Activated naive CD8-positive, alpha-beta T cell treated with anti-CD3 and anti-CD28 coated beads, Interleukin-2, amount 10 ng/mL, durations not matched to agents 7 days and 5 days (primary cell): ENCODE measurements at regions of chr1 and their contacts with region 1.

Region 1: DNA sequence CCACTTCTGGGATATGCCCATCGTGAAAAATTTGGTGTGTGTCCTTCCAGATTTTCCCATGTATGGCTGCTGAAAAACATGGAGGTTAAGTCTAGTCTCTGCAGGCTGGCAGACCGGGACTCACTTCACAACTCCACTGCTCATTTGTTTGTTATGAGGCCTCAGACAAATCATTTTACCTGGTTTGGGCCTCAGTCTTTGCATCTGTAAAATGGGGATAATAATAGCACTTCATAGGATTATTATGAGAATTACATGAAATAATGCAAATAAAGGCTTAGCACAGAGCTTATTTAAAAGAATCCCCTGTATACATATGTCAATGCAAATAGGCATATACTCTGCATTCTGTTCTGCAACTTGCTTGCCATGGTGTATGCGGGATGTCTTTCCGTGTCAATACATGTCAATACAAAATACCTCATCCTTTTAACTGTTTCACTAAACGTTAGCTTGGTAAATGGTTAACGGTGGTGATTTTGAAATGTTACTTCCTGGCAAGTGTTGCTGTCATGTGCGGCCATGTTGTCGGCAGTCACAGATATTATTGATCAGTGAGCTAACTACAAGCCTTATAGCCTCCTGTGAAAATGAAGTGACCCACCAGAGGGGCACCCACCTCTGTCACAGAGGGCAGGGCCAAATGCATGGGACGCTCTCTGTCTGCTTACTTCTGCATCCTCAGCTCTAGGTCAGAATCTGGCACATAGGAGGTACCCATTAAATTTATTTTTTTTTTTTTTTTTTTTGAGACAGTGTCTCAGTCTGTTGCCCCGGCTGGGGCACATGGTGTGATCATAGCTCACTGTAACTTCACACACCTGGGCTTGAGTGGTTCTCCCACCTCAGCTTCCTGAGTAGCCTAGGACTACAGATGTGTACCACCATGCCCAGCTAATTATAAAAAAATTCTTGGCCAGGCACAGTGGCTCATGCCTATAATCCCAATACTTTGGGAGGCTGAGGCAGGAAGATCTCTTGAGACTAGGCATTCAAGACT is 4.3 kb downstream of the LCK start:
- DNase-seq: peak; percentile 48
- ATAC-seq: peak; percentile 12
- H3K4me3 Mint-ChIP-seq: peak overlapping the region; percentile 99
- H3K27ac Mint-ChIP-seq: peak overlapping the region; percentile 88
- H3K4me1 Mint-ChIP-seq: peaks cover 44% of the 10 kb centered on the region
- H3K27me3 Mint-ChIP-seq: no peaks in the 10 kb centered on the region

Region 2: DNA sequence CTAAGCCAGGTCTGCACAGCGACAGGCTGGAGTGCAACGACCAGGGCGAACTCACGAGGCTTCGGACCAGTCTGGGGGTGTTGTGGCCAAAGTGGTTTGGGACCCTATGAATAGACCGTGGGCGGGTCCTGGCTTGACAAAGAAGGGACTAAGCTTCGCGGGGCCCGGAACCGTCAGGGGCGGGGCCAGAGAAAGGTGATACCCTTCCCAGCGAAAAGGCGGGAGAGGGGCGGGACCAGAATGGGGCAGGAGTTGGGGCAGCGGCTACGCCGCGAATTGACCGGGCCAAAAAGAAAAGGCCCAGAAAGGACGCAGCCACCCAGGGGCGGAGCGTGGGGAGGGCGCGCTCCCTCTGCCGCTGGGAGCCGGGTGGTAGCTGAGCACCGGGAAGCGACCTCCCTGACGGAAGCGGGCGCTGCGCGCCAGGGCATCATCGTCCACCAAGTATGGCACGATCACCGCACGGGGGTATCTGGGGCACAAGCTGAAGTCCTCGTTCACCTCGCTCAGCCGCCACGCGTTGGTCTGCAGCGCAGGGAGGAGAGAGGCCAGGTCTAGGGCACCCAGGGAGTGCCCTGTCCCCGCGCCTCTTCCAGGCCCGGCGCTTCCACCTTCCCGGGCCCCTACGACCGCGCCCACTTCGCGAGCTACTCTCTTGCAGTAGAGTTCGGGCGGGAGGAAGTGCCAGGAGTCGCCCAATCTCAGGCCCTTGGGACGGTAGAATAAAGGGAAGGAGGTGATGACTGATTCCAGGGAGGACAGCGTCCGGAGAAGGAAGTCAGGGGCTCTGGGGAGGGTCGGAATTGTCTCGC is 15.0 kb before region 1 on chr1:
- POLR2A ChIA-PET with region 1: interaction called, 69 read pairs
- DNase-seq: peak; percentile 66
- ATAC-seq: peak; percentile 59
- H3K4me3 Mint-ChIP-seq: peak overlapping the region; percentile 84
- H3K27ac Mint-ChIP-seq: peak overlapping the region; percentile 79
- H3K4me1 Mint-ChIP-seq: peaks cover 14% of the 10 kb centered on the region
- H3K27me3 Mint-ChIP-seq: no peaks in the 10 kb centered on the region

Region 3: DNA sequence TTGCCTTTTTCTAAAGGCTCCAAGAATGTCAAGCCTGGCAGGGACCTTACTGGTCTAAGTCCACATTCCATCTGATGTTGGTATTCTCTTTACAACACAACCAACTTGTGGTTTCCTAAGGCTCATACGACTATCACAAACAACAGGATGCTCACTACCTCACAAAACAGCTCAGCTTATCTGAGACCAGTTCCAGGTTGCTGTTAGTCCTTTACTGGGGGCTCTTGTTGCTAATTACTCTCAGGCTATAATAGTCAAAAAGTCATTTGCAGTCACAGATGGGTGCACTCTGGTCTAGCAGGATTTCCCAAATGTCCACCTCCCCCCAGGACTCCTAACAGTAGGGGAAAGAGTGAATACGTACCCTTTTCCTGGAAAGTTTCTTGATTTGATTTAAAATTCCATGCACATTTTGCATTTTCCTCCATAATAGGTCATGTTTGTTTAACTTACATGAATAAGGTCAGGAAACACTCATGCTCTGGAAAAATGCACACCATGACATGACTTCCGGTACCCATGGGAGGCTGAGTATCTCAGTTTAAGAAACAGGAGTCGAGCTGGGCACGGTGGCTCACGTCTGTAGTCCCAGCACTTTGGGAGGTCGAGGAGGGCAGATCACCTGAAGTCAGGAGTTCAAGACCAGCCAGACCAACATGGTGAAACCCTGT is 11.7 kb after region 1 on chr1:
- POLR2A ChIA-PET with region 1: interaction called, 183 read pairs
- DNase-seq: no peak
- ATAC-seq: peak; percentile 44
- H3K4me3 Mint-ChIP-seq: peak overlapping the region; percentile 90
- H3K27ac Mint-ChIP-seq: peak overlapping the region; percentile 99
- H3K4me1 Mint-ChIP-seq: peaks cover 48% of the 10 kb centered on the region
- H3K27me3 Mint-ChIP-seq: no peaks in the 10 kb centered on the region

Region 4: DNA sequence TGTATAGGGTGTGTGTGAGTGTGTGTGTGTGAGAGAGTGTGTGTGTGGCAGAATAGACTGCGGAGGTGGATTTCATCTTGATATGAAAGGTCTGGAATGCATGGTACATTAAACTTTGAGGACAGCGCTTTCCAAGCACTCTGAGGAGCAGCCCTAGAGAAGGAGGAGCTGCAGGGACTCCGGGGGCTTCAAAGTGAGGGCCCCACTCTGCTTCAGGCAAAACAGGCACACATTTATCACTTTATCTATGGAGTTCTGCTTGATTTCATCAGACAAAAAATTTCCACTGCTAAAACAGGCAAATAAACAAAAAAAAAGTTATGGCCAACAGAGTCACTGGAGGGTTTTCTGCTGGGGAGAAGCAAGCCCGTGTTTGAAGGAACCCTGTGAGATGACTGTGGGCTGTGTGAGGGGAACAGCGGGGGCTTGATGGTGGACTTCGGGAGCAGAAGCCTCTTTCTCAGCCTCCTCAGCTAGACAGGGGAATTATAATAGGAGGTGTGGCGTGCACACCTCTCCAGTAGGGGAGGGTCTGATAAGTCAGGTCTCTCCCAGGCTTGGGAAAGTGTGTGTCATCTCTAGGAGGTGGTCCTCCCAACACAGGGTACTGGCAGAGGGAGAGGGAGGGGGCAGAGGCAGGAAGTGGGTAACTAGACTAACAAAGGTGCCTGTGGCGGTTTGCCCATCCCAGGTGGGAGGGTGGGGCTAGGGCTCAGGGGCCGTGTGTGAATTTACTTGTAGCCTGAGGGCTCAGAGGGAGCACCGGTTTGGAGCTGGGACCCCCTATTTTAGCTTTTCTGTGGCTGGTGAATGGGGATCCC is 18.2 kb after region 1 on chr1:
- POLR2A ChIA-PET with region 1: interaction called, 183 read pairs
- DNase-seq: peak; percentile 70
- ATAC-seq: peak; percentile 80
- H3K4me3 Mint-ChIP-seq: peak overlapping the region; percentile 83
- H3K27ac Mint-ChIP-seq: peak overlapping the region; percentile 91
- H3K4me1 Mint-ChIP-seq: peaks cover 56% of the 10 kb centered on the region
- H3K27me3 Mint-ChIP-seq: no peaks in the 10 kb centered on the region

Region 5: DNA sequence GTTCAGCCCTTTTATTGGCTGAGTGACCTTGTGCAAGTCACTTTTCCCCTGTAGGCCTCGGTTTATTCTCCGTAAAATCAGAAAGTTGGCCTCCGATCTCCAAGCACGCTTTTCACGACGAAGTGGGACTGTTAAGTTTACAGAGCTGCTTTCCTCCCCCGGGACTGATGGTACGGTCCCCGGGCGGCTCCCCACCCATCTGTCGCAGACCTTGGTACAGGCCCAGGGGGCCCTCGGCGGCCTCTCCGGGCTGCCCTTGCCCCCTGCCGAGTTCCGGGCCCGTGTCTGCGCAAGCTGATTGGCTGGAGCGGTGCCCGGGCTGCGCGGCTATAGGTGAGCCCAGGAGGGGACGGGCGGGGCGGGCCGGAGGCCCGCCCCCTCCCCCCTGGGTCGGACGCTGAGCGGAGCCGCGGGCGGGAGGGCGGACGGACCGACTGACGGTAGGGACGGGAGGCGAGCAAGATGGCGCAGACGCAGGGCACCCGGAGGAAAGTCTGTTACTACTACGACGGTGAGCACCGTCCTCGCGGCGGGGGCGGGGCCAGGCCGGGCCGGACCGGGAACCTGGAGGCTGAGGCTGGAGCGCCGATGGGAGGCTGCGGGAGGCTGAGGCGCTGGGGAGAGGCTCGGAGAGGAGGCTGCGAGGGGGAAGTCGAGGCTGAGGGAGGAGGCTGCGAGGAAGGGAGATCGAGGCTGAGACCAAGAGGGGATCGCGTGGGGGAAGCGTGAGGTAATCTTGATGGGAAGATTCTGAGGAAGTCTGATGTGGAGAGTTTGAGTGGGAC is 36.5 kb after region 1 on chr1 and contains the start of gene HDAC1:
- POLR2A ChIA-PET with region 1: interaction called, 60 read pairs
- DNase-seq: peak; percentile 96
- ATAC-seq: peak; percentile 99
- H3K4me3 Mint-ChIP-seq: peak within 1 kb of the TSS; percentile 100
- H3K27ac Mint-ChIP-seq: peak within 1 kb of the TSS; percentile 87
- H3K4me1 Mint-ChIP-seq: peaks cover 29% of the 10 kb centered on the region
- H3K27me3 Mint-ChIP-seq: no peaks in the 10 kb centered on the region
- total RNA-seq, gene HDAC1: 195 to 197 TPM

Region 6: GRCh38 chr1:32307323-32307722 is 52.0 kb after region 1 on chr1:
- POLR2A ChIA-PET with region 1: no interaction called
- DNase-seq: no peak
- ATAC-seq: no peak
- H3K4me3 Mint-ChIP-seq: no peak overlapping the region
- H3K27ac Mint-ChIP-seq: peak overlapping the region; percentile 7
- H3K4me1 Mint-ChIP-seq: peaks cover 34% of the 10 kb centered on the region
- H3K27me3 Mint-ChIP-seq: no peaks in the 10 kb centered on the region